ENCODE measurements at regions of chr2 and their contacts with region 1.

Region 1: DNA sequence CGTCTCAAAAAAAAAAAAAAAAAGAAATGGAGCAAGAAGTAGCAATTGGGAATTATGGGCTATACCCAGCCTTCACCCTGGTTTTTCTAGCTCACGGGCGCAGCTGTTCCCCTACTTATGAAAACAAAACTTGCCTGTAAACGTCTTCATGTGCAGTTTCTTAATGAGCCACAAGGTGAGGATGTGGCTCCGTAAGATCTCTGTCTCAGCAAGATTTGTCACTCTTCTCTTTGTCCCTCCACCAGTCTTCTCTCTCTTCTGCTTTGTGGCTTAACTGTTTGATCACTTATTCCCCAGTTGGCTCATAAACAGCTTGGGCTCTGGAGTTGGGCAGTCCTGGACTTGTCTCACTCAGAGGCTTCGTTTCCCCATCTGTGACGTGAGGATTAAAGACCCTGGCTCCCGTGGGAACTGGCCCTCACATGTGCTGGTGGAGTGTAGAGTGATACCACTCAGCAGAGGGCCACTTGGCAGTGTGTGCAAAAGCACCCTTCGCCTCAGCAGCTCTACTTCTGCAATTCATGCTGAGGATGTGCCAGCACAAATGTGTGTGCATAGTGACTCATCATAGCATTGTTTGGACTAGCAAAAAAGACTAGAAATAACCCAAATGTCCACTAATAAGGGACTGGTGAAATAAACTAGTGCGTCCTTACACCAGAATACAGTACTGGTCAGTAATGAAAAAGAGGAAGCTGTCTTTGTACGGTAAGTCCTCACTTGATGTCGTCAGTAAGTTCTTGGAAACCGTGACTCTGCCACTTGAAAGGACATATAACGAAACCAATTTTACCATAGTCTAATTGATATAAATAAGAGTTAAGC is 8.7 kb downstream of the CEP68 start:
- DNase-seq: peak; percentile 72
- ATAC-seq: peak; percentile 76
- H3K4me3 Mint-ChIP-seq: no peak overlapping the region
- H3K27ac Mint-ChIP-seq: peak overlapping the region; percentile 69
- H3K4me1 Mint-ChIP-seq: peaks cover 37% of the 10 kb centered on the region
- H3K27me3 Mint-ChIP-seq: no peaks in the 10 kb centered on the region

Region 2: DNA sequence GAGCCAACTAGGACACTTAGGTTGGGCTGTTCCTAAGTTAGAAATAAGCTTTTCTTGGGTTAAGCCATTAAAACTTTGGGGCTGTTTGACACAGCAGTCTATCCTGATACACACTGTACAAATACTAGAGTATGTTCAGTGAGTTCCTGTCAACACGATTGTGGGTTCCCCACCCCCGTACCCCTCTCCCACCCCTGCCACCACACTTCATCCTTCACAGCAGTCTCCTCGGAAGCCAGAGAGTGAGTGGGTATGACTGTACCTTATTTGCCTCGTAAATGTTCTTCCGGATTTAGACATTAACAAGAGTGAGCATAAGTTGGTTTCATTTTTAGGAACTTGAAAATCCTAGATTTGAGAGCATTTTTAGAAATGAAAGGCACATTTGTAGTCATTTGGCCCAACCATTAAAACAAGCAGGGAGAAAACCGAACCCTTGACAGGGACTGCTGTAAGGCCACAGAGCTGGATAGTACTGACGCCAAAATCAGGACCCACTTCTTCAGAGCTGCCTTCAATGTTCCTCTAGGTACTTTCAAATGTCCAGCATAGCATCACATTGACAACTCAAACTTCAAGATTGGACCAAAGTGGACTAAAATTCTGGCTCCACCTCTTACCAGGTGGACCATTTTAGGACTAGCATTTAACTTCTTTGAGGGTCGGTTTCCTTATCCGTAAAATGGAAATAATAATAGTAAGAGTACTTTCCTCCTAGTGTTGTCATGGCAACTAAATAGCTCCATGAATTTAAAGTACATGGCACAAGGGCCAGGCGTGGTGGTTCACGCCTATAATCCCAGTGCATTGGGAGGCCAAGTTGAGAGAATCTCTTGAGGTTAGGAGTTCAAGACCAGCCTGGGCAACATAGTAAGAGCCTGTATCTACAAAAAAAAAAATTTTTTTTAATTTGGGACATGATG is 244.9 kb before region 1 on chr2:
- CTCF ChIA-PET with region 1: no interaction called
- POLR2A ChIA-PET with region 1: no interaction called
- DNase-seq: peak; percentile 67
- ATAC-seq: peak; percentile 92
- H3K4me3 Mint-ChIP-seq: peak overlapping the region; percentile 61
- H3K27ac Mint-ChIP-seq: peak overlapping the region; percentile 90
- H3K4me1 Mint-ChIP-seq: peaks cover 35% of the 10 kb centered on the region
- H3K27me3 Mint-ChIP-seq: no peaks in the 10 kb centered on the region

Region 3: DNA sequence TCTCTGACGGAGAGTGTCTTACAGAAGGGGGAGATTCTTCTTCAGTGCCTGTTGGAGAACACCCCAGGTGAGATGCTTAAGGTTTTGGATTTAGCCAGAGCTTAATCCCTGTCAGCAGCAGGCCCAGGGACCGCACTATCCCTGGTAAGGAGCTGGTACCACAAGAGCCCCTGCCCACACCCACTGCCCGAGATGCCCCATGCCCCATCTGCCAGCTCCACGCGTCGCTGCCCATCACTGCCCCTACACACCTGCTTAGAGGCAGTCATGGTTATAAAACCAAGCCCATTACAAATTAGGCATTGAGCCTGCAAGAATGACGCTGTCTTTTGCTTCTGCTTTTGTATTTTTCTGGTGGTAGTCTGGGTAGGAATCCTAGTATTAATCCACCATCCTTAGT is 13.0 kb after region 1 on chr2:
- CTCF ChIA-PET with region 1: interaction called, 14 read pairs
- POLR2A ChIA-PET with region 1: no interaction called
- DNase-seq: no peak
- ATAC-seq: no peak
- H3K4me3 Mint-ChIP-seq: no peak overlapping the region
- H3K27ac Mint-ChIP-seq: peak overlapping the region; percentile 22
- H3K4me1 Mint-ChIP-seq: peaks cover 11% of the 10 kb centered on the region
- H3K27me3 Mint-ChIP-seq: no peaks in the 10 kb centered on the region

Region 4: GRCh38 chr2:65129826-65130663 is 65.1 kb after region 1 on chr2 and contains the start of gene RAB1A:
- CTCF ChIA-PET with region 1: interaction called, 18 read pairs
- POLR2A ChIA-PET with region 1: interaction called, 7 read pairs
- DNase-seq: peak; percentile 100
- ATAC-seq: peak; percentile 96
- H3K4me3 Mint-ChIP-seq: peak within 1 kb of the TSS; percentile 100
- H3K27ac Mint-ChIP-seq: peak within 1 kb of the TSS; percentile 100
- H3K4me1 Mint-ChIP-seq: peaks cover 32% of the 10 kb centered on the region
- H3K27me3 Mint-ChIP-seq: no peaks in the 10 kb centered on the region
- total RNA-seq, gene RAB1A: 58.7 to 62.7 TPM

Region 5: GRCh38 chr2:65164426-65164891 is 99.5 kb after region 1 on chr2:
- CTCF ChIA-PET with region 1: interaction called, 82 read pairs
- POLR2A ChIA-PET with region 1: interaction called, 3 read pairs
- DNase-seq: no peak
- ATAC-seq: no peak
- H3K4me3 Mint-ChIP-seq: no peak overlapping the region
- H3K27ac Mint-ChIP-seq: no peak overlapping the region
- H3K4me1 Mint-ChIP-seq: peaks cover 21% of the 10 kb centered on the region
- H3K27me3 Mint-ChIP-seq: no peaks in the 10 kb centered on the region

Region 6: GRCh38 chr2:65177751-65178442 is 113.0 kb after region 1 on chr2:
- CTCF ChIA-PET with region 1: interaction called, 12 read pairs
- POLR2A ChIA-PET with region 1: no interaction called
- DNase-seq: no peak
- ATAC-seq: no peak
- H3K4me3 Mint-ChIP-seq: no peak overlapping the region
- H3K27ac Mint-ChIP-seq: no peak overlapping the region
- H3K4me1 Mint-ChIP-seq: no peaks in the 10 kb centered on the region
- H3K27me3 Mint-ChIP-seq: peaks cover 5% of the 10 kb centered on the region

Measured in activated CD8-positive, alpha-beta T cell treated with anti-CD3 and anti-CD28 coated beads, Interleukin-2, amount 10 ng/mL, durations not matched to agents 7 days and 5 days (primary cell).